PC-9 (cell line): ENCODE measurements at regions of chr10 and their contacts with region 1.

Region 1: DNA sequence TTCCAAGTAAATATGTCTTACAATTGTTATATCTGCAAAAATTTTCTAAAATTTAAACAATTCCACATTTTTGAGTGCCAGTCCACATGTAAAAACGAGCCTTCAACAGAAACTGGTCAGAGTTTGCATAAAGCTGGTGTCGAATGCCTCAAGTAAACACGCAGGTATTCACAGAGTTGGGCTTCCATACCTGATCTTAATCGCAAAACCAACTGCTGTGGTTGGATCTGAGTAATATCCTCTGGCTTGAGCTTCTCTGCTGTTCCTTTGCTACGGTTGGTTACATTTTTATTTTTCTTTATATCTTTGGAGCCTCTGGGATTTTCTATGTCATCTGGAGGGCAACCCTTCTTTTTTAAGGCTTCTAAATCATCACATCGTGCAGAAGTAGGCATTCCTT is 28.4 kb downstream of the ITGB1 start:
- DNase-seq: peak in 1 of 2 experiments; percentile 12
- H3K4me3 ChIP-seq: no peak overlapping the region
- H3K27ac ChIP-seq: no peak overlapping the region
- H3K4me1 ChIP-seq: no peaks in the 10 kb centered on the region
- H3K27me3 ChIP-seq: no peaks in the 10 kb centered on the region
- CTCF ChIP-seq: no peak

Region 2: DNA sequence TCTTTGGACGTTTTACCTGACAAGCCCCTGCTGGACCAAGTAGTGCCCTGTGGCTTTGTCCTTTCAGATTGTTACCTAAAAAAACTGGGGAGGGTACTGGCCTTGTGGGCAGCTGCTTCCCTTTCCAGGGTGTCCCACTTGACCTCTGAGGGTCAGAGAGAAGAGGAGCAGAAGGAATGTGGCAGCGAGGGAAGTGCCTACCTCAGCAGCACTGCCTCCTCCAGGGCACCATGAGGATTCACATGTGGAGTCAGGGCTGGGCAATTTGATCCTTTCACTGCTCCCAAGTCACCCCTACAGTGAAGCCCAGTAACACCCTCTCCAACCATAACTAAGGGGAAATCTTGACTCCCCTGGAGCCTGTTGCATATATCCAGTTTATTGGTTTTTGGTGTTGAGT is 36.2 kb before region 1 on chr10:
- CTCF ChIA-PET with region 1: no interaction called
- POLR2A ChIA-PET with region 1: no interaction called
- intact Hi-C with region 1: loop called (anchors 2 kb)
- DNase-seq: no peak
- H3K4me3 ChIP-seq: no peak overlapping the region
- H3K27ac ChIP-seq: no peak overlapping the region
- H3K4me1 ChIP-seq: no peaks in the 10 kb centered on the region
- H3K27me3 ChIP-seq: no peaks in the 10 kb centered on the region
- CTCF ChIP-seq: 0 out of 2 replicates have a peak, but pooled peaks have one; percentile 15

Region 3: GRCh38 chr10:32943395-32943794 is 13.8 kb after region 1 on chr10:
- CTCF ChIA-PET with region 1: interaction called, 7 read pairs
- POLR2A ChIA-PET with region 1: interaction called, 35 read pairs
- intact Hi-C with region 1: no loop called
- DNase-seq: no peak
- H3K4me3 ChIP-seq: no peak overlapping the region
- H3K27ac ChIP-seq: no peak overlapping the region
- H3K4me1 ChIP-seq: 0 out of 2 replicates have a peak, but pooled peaks cover 4% of the 10 kb centered on the region
- H3K27me3 ChIP-seq: no peaks in the 10 kb centered on the region
- CTCF ChIP-seq: no peak

Region 4: DNA sequence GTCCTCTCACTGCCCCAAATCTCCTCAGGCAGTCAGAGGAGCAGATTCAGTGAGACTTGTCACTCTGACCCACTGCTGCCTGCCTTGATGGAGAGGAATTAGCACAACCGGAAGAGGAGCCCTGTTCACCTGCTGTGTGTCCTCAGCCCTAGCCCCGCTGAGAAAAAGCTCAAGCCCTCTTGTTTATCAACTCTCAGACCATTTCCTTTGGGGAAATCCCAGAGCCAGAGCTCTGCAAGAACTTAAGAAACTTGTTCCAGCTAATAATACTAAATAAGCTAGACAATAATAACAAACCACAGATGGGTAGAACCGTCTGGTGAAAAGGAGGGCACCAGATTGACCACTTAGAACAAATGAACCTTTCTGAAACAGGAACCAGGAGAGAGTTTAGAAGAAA is 66.1 kb after region 1 on chr10:
- CTCF ChIA-PET with region 1: no interaction called
- POLR2A ChIA-PET with region 1: no interaction called
- intact Hi-C with region 1: no loop called
- DNase-seq: no peak
- H3K4me3 ChIP-seq: no peak overlapping the region
- H3K27ac ChIP-seq: no peak overlapping the region
- H3K4me1 ChIP-seq: peaks cover 18% of the 10 kb centered on the region
- H3K27me3 ChIP-seq: no peaks in the 10 kb centered on the region
- CTCF ChIP-seq: no peak